ENCODE measurements at regions of chr1 and their contacts with region 1.

Region 1: GRCh38 chr1:44660176-44660575 is 14.1 kb downstream of the TMEM53 start:
- DNase-seq: no peak
- H3K4me3 ChIP-seq: no peak overlapping the region
- H3K27ac ChIP-seq: no peak overlapping the region
- H3K4me1 ChIP-seq: no peaks in the 10 kb centered on the region
- H3K27me3 ChIP-seq: no peaks in the 10 kb centered on the region
- CTCF ChIP-seq: no peak

Region 2: GRCh38 chr1:44646261-44647110 is 13.7 kb before region 1 on chr1:
- CTCF ChIA-PET with region 1: interaction called, 16 read pairs
- POLR2A ChIA-PET with region 1: no interaction called
- intact Hi-C with region 1: no loop called
- DNase-seq: no peak
- H3K4me3 ChIP-seq: no peak overlapping the region
- H3K27ac ChIP-seq: no peak overlapping the region
- H3K4me1 ChIP-seq: no peaks in the 10 kb centered on the region
- H3K27me3 ChIP-seq: no peaks in the 10 kb centered on the region
- CTCF ChIP-seq: no peak